ENCODE measurements at regions of chr7 and their contacts with region 1.

Region 1: GRCh38 chr7:6350433-6351058 is 78.1 kb upstream of the CYTH3 start:
- DNase-seq: no peak
- ATAC-seq: no peak
- H3K4me3 ChIP-seq: no peak overlapping the region
- H3K27ac ChIP-seq: no peak overlapping the region
- H3K4me1 ChIP-seq: no peaks in the 10 kb centered on the region
- H3K27me3 ChIP-seq: no peaks in the 10 kb centered on the region

Region 2: DNA sequence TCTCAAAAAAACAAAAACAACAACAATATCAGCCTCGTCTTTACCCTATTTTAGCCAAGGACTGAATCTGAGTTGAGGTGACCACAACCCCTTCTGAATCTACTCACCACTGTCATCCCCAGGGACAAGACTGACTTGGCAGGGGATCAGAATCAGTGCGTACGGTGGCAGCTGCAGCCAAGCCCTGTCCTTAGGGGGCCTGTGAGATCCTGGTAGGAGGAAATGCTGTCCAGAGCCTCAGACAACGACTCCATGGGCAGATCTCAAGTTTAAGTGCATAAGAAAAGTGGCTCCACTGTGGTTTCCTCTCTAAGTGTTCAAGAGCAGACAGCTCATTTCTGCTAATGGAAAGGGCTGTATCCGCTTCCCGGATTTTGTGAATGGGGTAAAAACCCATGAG is 55.7 kb before region 1 on chr7:
- intact Hi-C with region 1: no loop called
- DNase-seq: no peak
- ATAC-seq: no peak
- H3K4me3 ChIP-seq: no peak overlapping the region
- H3K27ac ChIP-seq: no peak overlapping the region
- H3K4me1 ChIP-seq: no peaks in the 10 kb centered on the region
- H3K27me3 ChIP-seq: no peaks in the 10 kb centered on the region

Region 3: DNA sequence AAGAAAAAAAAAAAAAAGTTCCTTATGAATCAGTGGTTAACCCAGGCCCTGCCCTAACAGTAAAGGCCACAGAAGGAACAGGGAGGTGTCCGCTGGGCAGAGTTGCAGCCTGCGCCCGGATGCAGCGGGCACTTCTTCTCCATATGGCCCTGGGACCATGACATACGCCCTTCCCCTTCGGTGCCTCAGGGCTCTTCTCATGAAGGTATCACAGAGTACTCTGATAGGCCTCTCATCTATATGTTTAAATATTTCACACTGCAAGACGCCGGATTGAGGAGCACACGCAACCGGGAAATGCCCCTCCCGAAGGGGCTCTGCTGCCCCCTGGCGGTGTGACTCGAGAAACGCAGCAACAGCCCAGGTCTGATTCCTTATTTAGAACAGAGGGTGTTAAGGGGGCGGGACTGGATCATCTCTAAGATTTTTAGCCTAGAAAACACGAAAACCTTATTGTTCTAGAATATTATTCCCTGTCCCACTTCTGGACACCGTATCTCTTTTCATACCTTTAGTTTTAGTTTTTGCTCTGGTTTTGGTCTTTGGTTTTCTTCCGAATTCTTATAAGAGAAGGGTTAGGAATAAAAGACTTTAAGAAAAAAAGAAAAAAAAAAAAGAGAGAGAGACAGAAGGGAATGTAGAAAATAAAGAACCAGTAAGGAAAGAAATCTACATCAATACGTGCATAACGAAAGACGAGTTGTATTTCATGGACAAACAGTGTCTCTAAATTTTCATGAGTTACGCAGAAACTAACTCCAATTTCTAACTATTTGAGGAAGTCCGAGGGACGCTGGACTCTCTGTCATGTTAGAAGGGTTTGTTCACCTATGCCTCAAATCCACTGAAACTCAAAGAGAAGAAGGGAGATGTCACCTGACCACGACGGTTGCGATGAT is 85.2 kb after region 1 on chr7:
- intact Hi-C with region 1: loop called in 1 of 2 experiments (anchors 10 kb)
- DNase-seq: peak; percentile 88 to 93
- ATAC-seq: peak; percentile 90
- H3K4me3 ChIP-seq: no peak overlapping the region
- H3K27ac ChIP-seq: no peak overlapping the region
- H3K4me1 ChIP-seq: no peaks in the 10 kb centered on the region
- H3K27me3 ChIP-seq: no peaks in the 10 kb centered on the region